Caco-2 (cell line): ENCODE measurements at regions of chr11 and their contacts with region 1.

Region 1: GRCh38 chr11:96389720-96390487 is at the starts of genes CCDC82 and JRKL:
- DNase-seq: peak; percentile 99 to 100
- H3K4me3 ChIP-seq: peak within 1 kb of the TSS; percentile 82
- H3K4me3 Mint-ChIP-seq: peak within 1 kb of the TSS; percentile 82
- H3K27ac Mint-ChIP-seq: peak within 1 kb of the TSS; percentile 88
- H3K4me1 ChIP-seq: peaks cover 28% of the 10 kb centered on the region
- H3K4me1 Mint-ChIP-seq: peaks cover 19% of the 10 kb centered on the region
- H3K27me3 ChIP-seq: no peaks in the 10 kb centered on the region
- H3K27me3 Mint-ChIP-seq: no peaks in the 10 kb centered on the region
- CTCF ChIP-seq: no peak
- total RNA-seq, gene CCDC82: 38.2 TPM in 2 replicates
- total RNA-seq, gene JRKL: 16.6 and 17.4 TPM in 2 replicates

Region 2: GRCh38 chr11:95790123-95790932 is 599.6 kb before region 1 on chr11 and contains the start of gene CEP57:
- CTCF ChIA-PET with region 1: interaction called, 5 read pairs
- POLR2A ChIA-PET with region 1: interaction called, 32 read pairs
- intact Hi-C with region 1: loop called (anchors 1 kb)
- DNase-seq: peak; percentile 99
- H3K4me3 ChIP-seq: peak within 1 kb of the TSS; percentile 72
- H3K4me3 Mint-ChIP-seq: peak within 1 kb of the TSS; percentile 72
- H3K27ac Mint-ChIP-seq: peak within 1 kb of the TSS; percentile 100
- H3K4me1 ChIP-seq: peaks cover 19% of the 10 kb centered on the region; the same call in 1 of the 2 replicates
- H3K4me1 Mint-ChIP-seq: peaks cover 23% of the 10 kb centered on the region
- H3K27me3 ChIP-seq: no peaks in the 10 kb centered on the region
- H3K27me3 Mint-ChIP-seq: no peaks in the 10 kb centered on the region
- CTCF ChIP-seq: no peak
- total RNA-seq, gene CEP57: 117 and 125 TPM in 2 replicates

Region 3: GRCh38 chr11:95849087-95849825 is 540.6 kb before region 1 on chr11:
- CTCF ChIA-PET with region 1: interaction called, 44 read pairs
- POLR2A ChIA-PET with region 1: interaction called, 6 read pairs
- intact Hi-C with region 1: loop called (anchors 1 kb)
- DNase-seq: peak; percentile 75 to 81
- H3K4me3 ChIP-seq: no peak overlapping the region
- H3K4me3 Mint-ChIP-seq: no peak overlapping the region
- H3K27ac Mint-ChIP-seq: no peak overlapping the region
- H3K4me1 ChIP-seq: no peaks in the 10 kb centered on the region
- H3K4me1 Mint-ChIP-seq: no peaks in the 10 kb centered on the region
- H3K27me3 ChIP-seq: no peaks in the 10 kb centered on the region
- H3K27me3 Mint-ChIP-seq: no peaks in the 10 kb centered on the region
- CTCF ChIP-seq: peak; percentile 71 to 85

Region 4: GRCh38 chr11:96091476-96091875 is 298.4 kb before region 1 on chr11:
- CTCF ChIA-PET with region 1: interaction called, 5 read pairs
- POLR2A ChIA-PET with region 1: no interaction called
- intact Hi-C with region 1: loop called (anchors 1 kb)
- DNase-seq: no peak
- H3K4me3 ChIP-seq: no peak overlapping the region
- H3K4me3 Mint-ChIP-seq: no peak overlapping the region
- H3K27ac Mint-ChIP-seq: peak overlapping the region; percentile 94
- H3K4me1 ChIP-seq: peaks cover 45% of the 10 kb centered on the region
- H3K4me1 Mint-ChIP-seq: peaks cover 59% of the 10 kb centered on the region
- H3K27me3 ChIP-seq: no peaks in the 10 kb centered on the region
- H3K27me3 Mint-ChIP-seq: no peaks in the 10 kb centered on the region
- CTCF ChIP-seq: peak; percentile 12 to 25

Region 5: GRCh38 chr11:96412761-96413381 is 23.0 kb after region 1 on chr11:
- CTCF ChIA-PET with region 1: interaction called, 4 read pairs
- POLR2A ChIA-PET with region 1: interaction called, 10 read pairs
- intact Hi-C with region 1: no loop called
- DNase-seq: no peak
- H3K4me3 ChIP-seq: no peak overlapping the region
- H3K4me3 Mint-ChIP-seq: no peak overlapping the region
- H3K27ac Mint-ChIP-seq: no peak overlapping the region
- H3K4me1 ChIP-seq: peaks cover 8% of the 10 kb centered on the region
- H3K4me1 Mint-ChIP-seq: no peaks in the 10 kb centered on the region
- H3K27me3 ChIP-seq: no peaks in the 10 kb centered on the region
- H3K27me3 Mint-ChIP-seq: peaks cover 8% of the 10 kb centered on the region
- CTCF ChIP-seq: no peak